Activated naive CD4-positive, alpha-beta T cell treated with anti-CD3 and anti-CD28 coated beads, Interleukin-2, amount 10 ng/mL, durations not matched to agents 7 days and 5 days (primary cell): ENCODE measurements at regions of chr6 and their contacts with region 1.

Region 1: DNA sequence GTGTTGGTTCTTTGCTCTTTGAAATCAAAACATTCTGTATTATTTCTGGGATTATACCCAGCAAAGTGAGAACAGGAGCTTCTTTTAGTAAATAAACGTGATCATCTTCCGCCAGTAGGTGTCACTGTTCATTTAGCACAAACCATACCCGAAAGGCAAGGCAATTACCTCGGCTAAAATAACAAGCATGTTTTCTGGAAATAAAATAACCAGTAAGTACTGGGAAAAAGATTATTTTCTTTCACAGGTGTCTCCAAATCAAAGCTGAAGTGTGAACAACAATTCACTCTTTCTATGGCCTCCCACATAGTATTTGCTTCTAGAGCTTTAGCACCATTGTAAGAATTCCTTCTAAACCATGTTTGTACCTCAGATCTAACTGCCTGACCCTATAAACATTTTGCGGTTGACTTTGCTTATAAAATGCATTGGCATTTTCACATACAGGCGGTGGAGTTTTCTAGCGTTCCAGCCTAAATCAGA is 144.6 kb upstream of the AGPAT4 start:
- DNase-seq: peak; percentile 35
- H3K4me3 Mint-ChIP-seq: no peak overlapping the region
- H3K27ac Mint-ChIP-seq: no peak overlapping the region
- H3K4me1 Mint-ChIP-seq: no peaks in the 10 kb centered on the region
- H3K27me3 Mint-ChIP-seq: peaks cover 7% of the 10 kb centered on the region

Region 2: DNA sequence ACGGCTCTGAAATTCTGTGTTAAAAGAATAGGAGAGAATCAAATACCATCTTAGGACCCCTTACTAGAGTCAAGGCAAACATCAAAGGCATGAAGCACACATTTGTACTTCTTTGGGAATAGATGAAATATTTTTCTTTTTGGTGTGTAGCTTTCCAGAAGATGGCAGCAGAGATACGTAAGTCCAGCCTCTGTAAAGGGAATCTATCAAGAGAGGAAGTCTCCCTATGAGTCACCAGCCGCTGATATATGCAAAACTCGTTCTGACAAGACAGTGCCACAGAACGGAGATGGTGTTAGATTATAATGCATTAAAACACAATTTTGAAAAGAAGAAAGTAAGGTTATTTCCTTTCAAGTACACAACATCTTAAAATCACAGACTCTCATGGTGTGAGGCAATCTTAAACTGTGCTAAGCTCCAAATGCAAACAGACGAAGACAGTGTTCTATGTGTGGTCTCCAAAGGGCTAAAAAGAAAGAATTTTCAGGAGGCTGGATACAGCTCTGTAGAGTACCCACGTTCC is 24.6 kb before region 1 on chr6:
- CTCF ChIA-PET with region 1: interaction called, 17 read pairs
- DNase-seq: peak; percentile 67
- H3K4me3 Mint-ChIP-seq: no peak overlapping the region
- H3K27ac Mint-ChIP-seq: no peak overlapping the region
- H3K4me1 Mint-ChIP-seq: no peaks in the 10 kb centered on the region
- H3K27me3 Mint-ChIP-seq: peaks cover 9% of the 10 kb centered on the region

Region 3: DNA sequence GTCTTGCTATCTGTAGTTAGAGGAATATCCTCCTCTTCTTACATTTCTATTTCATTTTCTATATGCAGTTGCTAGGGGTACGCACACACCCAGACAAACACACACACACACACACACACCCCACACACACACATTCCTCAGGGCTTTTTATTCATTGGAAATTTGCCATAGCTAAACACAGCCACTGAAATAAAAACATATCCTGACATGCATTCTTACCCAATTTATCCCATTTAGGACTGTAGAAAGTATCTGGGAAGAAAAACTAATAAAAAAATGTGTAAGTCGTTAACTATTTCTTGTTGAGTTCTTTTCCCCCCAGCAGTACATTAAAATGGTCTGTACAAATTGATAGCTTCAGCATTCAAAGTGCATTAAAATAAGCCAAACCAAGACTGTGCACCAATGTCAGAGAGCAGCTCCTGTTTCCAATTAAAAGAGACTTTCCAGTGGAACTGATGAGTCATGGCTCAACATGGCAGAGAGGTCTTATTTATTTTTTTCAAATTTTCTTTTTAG is 213.2 kb after region 1 on chr6:
- CTCF ChIA-PET with region 1: no interaction called
- DNase-seq: no peak
- H3K4me3 Mint-ChIP-seq: no peak overlapping the region
- H3K27ac Mint-ChIP-seq: no peak overlapping the region
- H3K4me1 Mint-ChIP-seq: no peaks in the 10 kb centered on the region
- H3K27me3 Mint-ChIP-seq: no peaks in the 10 kb centered on the region

Region 4: DNA sequence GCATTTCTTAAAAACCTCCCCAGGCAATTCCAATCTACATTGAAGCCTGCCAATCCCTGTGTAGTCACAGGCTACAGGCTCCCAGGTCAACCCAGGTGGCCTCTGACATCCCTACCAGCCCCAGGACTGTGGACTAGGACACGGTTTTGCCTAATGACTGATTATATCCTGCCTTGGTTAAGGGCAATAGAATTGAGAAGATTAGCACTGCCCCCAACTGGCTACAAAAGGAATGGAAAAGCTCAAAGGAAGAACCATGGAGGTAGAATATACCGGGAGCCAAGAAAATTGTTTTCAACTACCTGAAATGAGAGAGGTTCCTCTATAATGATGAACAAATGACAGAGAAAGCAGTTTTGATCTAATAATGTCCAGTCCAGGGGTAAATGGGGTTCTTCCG is 276.5 kb after region 1 on chr6:
- CTCF ChIA-PET with region 1: interaction called, 14 read pairs
- DNase-seq: no peak
- H3K4me3 Mint-ChIP-seq: no peak overlapping the region
- H3K27ac Mint-ChIP-seq: no peak overlapping the region
- H3K4me1 Mint-ChIP-seq: no peaks in the 10 kb centered on the region
- H3K27me3 Mint-ChIP-seq: no peaks in the 10 kb centered on the region